ENCODE measurements at regions of chr6 and their contacts with region 1.

Region 1: GRCh38 chr6:166382933-166383801 is at the start of gene MPC1:
- DNase-seq: peak; percentile 93
- H3K4me3 Mint-ChIP-seq: peak within 1 kb of the TSS; percentile 89
- H3K27ac Mint-ChIP-seq: peak within 1 kb of the TSS; percentile 69
- H3K4me1 Mint-ChIP-seq: peaks cover 9% of the 10 kb centered on the region
- H3K27me3 Mint-ChIP-seq: peaks cover 2% of the 10 kb centered on the region
- total RNA-seq, gene MPC1: 20.3 and 21.1 TPM in 2 replicates

Region 2: GRCh38 chr6:166206510-166207283 is 176.5 kb before region 1 on chr6:
- intact Hi-C with region 1: no loop called
- DNase-seq: no peak
- H3K4me3 Mint-ChIP-seq: no peak overlapping the region
- H3K27ac Mint-ChIP-seq: no peak overlapping the region
- H3K4me1 Mint-ChIP-seq: no peaks in the 10 kb centered on the region
- H3K27me3 Mint-ChIP-seq: peaks cover 27% of the 10 kb centered on the region

Region 3: GRCh38 chr6:166275714-166276166 is 107.4 kb before region 1 on chr6:
- intact Hi-C with region 1: loop called (anchors 1 kb)
- DNase-seq: peak; percentile 68
- H3K4me3 Mint-ChIP-seq: no peak overlapping the region
- H3K27ac Mint-ChIP-seq: no peak overlapping the region
- H3K4me1 Mint-ChIP-seq: peaks cover 6% of the 10 kb centered on the region
- H3K27me3 Mint-ChIP-seq: peaks cover 24% of the 10 kb centered on the region

Region 4: GRCh38 chr6:166313255-166314070 is 69.7 kb before region 1 on chr6:
- intact Hi-C with region 1: loop called (anchors 1 kb)
- DNase-seq: no peak
- H3K4me3 Mint-ChIP-seq: no peak overlapping the region
- H3K27ac Mint-ChIP-seq: no peak overlapping the region
- H3K4me1 Mint-ChIP-seq: no peaks in the 10 kb centered on the region
- H3K27me3 Mint-ChIP-seq: peaks cover 28% of the 10 kb centered on the region

Region 5: GRCh38 chr6:166342349-166343149 is 40.6 kb before region 1 on chr6 and contains the start of gene SFT2D1:
- intact Hi-C with region 1: loop called (anchors 1 kb)
- DNase-seq: peak; percentile 81
- H3K4me3 Mint-ChIP-seq: peak within 1 kb of the TSS; percentile 89
- H3K27ac Mint-ChIP-seq: peak within 1 kb of the TSS; percentile 86
- H3K4me1 Mint-ChIP-seq: peaks cover 4% of the 10 kb centered on the region
- H3K27me3 Mint-ChIP-seq: peaks cover 2% of the 10 kb centered on the region
- total RNA-seq, gene SFT2D1: 54.5 and 59.5 TPM in 2 replicates